ENCODE measurements at regions of chr11 and their contacts with region 1.

Region 1: DNA sequence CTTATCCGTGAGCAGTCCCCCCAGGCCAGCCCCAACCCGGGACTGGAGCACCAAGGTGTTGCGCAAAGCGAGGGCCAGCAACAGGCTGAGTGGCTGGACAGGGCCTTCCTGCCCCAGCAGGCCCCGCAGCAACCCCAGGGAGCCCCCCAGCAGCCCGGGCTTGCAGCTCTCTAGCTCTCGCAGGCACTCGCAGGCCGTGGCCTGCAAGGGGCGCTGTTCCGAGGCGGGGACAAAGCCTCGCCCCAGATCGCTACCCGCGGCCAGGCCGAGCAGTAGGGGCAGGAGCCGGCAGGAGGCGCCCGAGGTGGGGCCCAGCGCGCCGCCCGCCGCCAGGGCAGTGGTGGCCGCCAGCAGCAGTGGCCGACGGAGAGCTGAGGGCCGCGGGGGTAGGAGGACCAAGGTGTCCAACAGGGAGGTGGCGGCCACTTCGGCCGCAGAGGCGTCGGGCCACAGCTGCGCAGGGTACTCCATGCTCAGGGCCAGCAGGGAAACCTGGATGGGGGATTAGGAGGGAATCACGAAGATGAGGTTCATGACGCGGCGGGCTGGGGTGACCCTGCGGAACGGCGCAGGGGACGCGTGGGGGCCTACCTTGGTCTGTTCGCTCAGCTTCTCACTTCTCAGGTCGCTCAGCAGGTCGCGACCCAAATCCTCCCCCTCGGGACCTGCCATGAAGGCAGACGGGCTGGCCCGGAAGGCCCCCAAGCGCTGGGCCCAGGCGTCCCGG is 762 bp downstream of the AP5B1 start:
- DNase-seq: peak; percentile 97
- ATAC-seq: peak; percentile 77
- H3K4me3 Mint-ChIP-seq: peak overlapping the region; percentile 86
- H3K27ac Mint-ChIP-seq: peak overlapping the region; percentile 68; the same call in 1 of the 2 replicates
- H3K4me1 Mint-ChIP-seq: peaks cover 19% of the 10 kb centered on the region
- H3K27me3 Mint-ChIP-seq: peaks cover 32% of the 10 kb centered on the region
- CTCF ChIP-seq: peak; percentile 96

Region 2: GRCh38 chr11:65569973-65570918 is 209.8 kb before region 1 on chr11 and contains the start of gene ZNRD2:
- CTCF ChIA-PET with region 1: no interaction called
- POLR2A ChIA-PET with region 1: no interaction called
- DNase-seq: peak; percentile 98
- ATAC-seq: peak; percentile 75
- H3K4me3 Mint-ChIP-seq: peak within 1 kb of the TSS; percentile 99
- H3K27ac Mint-ChIP-seq: peak within 1 kb of the TSS; percentile 98
- H3K4me1 Mint-ChIP-seq: peaks cover 41% of the 10 kb centered on the region
- H3K27me3 Mint-ChIP-seq: peaks cover 7% of the 10 kb centered on the region
- CTCF ChIP-seq: no peak; the same call in 1 of the 2 replicates
- total RNA-seq, gene ZNRD2: 54.8 to 70.9 TPM (median 55.7 TPM) in 3 replicates

Region 3: DNA sequence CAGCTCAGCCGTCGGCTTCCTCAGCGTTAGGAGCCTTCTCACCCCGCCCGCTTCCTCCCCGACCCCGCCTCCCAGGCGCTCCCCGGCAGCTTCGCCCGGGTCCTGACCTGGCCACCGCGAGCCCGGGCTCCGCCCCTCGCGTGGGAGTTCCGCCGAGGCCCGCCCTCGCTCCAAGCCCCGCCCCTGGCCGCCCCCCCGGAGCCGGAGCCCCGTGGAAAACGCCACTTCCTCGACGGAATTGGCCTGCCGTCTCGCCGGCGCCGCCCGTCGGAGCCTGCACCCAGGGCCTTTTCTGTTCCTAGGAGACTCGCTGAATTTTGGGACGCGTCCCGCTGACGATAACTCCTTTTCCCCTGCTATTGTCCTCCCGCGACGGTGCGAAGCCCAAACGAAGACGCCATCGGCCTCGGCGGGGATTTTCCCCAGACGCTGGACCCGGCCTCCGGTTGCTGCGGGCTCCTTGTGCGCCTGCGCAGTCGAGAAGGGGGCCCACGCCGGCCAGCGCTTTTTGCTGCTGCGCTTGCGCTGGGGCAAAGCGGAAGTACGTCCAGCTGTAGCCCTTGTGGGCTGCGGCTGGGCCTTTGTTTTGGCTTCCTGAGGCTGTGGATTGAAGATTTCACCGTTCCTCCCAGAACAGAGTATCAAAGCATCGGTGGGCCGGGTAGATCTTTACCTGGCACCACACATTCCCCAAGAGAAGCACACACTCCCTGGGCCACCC is 127.3 kb before region 1 on chr11:
- CTCF ChIA-PET with region 1: interaction called, 10 read pairs
- POLR2A ChIA-PET with region 1: no interaction called
- DNase-seq: peak; percentile 90
- ATAC-seq: peak; percentile 84
- H3K4me3 Mint-ChIP-seq: peak overlapping the region; percentile 80
- H3K27ac Mint-ChIP-seq: peak overlapping the region; percentile 96
- H3K4me1 Mint-ChIP-seq: peaks cover 21% of the 10 kb centered on the region
- H3K27me3 Mint-ChIP-seq: peaks cover 3% of the 10 kb centered on the region; the same call in 1 of the 2 replicates
- CTCF ChIP-seq: no peak

Region 4: GRCh38 chr11:65726660-65727059 is 53.4 kb before region 1 on chr11:
- CTCF ChIA-PET with region 1: interaction called, 49 read pairs
- POLR2A ChIA-PET with region 1: no interaction called
- DNase-seq: no peak
- ATAC-seq: peak; percentile 77
- H3K4me3 Mint-ChIP-seq: no peak overlapping the region
- H3K27ac Mint-ChIP-seq: no peak overlapping the region
- H3K4me1 Mint-ChIP-seq: no peaks in the 10 kb centered on the region
- H3K27me3 Mint-ChIP-seq: peaks cover 18% of the 10 kb centered on the region
- CTCF ChIP-seq: no peak; the same call in 1 of the 2 replicates

Region 5: DNA sequence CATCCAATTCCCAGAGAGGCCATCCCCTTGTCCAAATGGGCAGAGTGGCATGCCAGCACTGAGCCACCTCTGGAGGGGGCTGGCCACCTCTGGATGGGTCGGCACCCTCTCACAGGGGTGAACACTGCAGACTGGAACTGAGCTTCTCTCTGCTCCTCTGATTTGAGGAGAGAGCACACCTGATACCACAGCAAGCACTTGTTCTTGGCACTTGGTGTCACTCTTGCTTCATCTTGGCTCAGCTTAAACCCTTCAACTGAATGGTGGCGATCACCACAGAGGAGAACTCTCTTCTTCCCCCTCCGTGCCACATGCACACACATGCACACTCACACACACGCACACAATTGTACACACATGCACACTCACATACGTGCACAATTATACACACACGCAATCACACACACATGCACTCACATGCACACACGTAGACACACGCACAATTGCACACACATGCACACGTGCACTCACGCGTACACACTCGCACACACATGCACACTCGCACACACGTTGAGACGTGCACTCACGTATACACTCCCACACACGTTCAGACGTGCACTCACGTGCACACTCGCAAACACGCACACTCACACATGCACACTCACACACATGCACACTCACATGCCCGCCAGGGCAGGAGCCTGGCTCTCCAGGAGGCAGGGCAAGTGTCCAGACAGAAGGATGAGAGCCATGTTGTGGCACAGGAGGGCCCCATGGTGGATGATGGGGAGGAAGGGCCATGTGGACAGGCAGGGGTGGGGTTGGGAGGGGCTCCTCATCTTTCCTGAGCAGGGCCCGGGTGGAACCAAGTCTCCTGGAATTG is 30.2 kb after region 1 on chr11:
- CTCF ChIA-PET with region 1: interaction called, 159 read pairs
- POLR2A ChIA-PET with region 1: no interaction called
- DNase-seq: no peak
- ATAC-seq: no peak
- H3K4me3 Mint-ChIP-seq: no peak overlapping the region
- H3K27ac Mint-ChIP-seq: peak overlapping the region; percentile 38; the same call in 1 of the 2 replicates
- H3K4me1 Mint-ChIP-seq: no peaks in the 10 kb centered on the region
- H3K27me3 Mint-ChIP-seq: no peaks in the 10 kb centered on the region; the same call in 1 of the 2 replicates
- CTCF ChIP-seq: no peak

Region 6: DNA sequence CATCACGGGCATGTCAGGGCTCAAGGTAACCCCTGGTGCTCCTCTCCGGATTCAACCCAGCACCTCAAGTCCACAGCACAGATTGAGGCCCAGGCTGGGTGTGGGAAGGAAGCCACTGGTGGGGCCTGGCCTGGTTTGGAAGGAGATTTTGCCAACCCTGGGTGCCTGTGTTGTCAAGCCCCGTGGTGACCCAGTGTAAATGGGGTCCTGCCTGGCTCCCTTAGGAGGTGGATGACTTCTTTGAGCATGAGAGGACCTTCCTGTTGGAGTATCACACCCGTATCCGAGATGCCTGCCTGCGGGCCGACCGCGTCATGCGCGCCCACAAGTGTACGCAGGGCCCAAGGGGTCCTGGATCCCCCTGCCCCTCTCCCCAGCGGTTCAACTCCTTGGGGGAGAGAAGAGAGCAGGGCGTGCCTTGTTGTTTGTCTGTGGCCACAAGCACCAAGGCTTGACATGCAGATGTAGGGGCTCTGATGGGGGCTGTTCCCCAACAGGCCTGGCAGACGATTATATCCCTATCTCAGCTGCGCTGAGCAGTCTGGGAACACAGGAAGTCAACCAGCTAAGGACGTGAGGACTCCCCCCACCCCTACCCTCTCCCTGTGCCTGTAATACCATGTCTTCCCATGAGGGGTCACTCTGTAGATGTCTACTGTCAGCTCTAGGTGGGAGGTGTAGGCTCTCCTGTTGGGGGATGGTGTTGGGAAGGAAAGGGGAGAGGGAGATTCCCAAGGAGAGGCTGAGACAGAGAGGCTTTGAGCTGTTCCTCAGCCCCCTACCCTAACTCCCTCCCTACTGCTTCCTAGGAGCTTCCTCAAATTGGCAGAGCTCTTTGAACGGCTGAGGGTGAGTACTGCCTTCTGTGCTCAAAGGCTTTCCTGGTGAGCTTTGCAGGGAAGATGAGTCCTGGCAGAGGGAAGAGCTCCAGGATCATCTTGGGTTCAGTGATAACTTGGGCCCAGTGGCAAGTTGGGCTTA is 71.1 kb after region 1 on chr11:
- CTCF ChIA-PET with region 1: interaction called, 61 read pairs
- POLR2A ChIA-PET with region 1: interaction called, 5 read pairs
- DNase-seq: peak; percentile 63
- ATAC-seq: peak; percentile 65
- H3K4me3 Mint-ChIP-seq: no peak overlapping the region
- H3K27ac Mint-ChIP-seq: peak overlapping the region; percentile 41; the same call in 1 of the 2 replicates
- H3K4me1 Mint-ChIP-seq: peaks cover 17% of the 10 kb centered on the region
- H3K27me3 Mint-ChIP-seq: peaks cover 10% of the 10 kb centered on the region
- CTCF ChIP-seq: peak; percentile 69

Region 7: GRCh38 chr11:66045177-66045639 is 265.2 kb after region 1 on chr11:
- CTCF ChIA-PET with region 1: interaction called, 17 read pairs
- POLR2A ChIA-PET with region 1: no interaction called
- DNase-seq: peak; percentile 93
- ATAC-seq: peak; percentile 78
- H3K4me3 Mint-ChIP-seq: no peak overlapping the region
- H3K27ac Mint-ChIP-seq: no peak overlapping the region; the same call in 1 of the 2 replicates
- H3K4me1 Mint-ChIP-seq: peaks cover 29% of the 10 kb centered on the region
- H3K27me3 Mint-ChIP-seq: no peaks in the 10 kb centered on the region
- CTCF ChIP-seq: peak; percentile 98

Measured in WTC11 (cell line).